ENCODE measurements at regions of chr1 and their contacts with region 1.

Region 1: DNA sequence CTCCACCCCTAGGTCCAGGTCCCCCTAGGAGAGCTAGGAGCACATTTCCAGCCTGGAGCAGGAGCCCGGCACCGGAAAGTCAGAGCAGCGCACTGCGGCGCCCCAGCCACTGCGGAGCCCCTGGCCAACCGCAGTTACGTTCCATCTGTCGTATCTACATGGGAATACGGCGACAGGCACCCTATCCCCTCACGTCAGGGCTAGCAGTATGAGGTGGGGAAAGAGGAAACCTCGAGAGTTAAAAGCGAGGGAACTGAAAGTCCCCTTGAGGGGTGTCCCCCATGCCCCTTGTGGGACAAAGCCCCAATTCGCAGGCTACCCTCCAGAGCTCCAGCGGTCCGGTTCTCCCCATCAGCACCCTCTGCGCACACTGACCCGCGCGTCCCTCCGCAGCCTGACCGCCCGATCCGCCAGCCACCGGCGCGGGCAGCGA is 995 bp downstream of the COLGALT2 start:
- DNase-seq: peak; percentile 67
- ATAC-seq: no peak

Region 2: DNA sequence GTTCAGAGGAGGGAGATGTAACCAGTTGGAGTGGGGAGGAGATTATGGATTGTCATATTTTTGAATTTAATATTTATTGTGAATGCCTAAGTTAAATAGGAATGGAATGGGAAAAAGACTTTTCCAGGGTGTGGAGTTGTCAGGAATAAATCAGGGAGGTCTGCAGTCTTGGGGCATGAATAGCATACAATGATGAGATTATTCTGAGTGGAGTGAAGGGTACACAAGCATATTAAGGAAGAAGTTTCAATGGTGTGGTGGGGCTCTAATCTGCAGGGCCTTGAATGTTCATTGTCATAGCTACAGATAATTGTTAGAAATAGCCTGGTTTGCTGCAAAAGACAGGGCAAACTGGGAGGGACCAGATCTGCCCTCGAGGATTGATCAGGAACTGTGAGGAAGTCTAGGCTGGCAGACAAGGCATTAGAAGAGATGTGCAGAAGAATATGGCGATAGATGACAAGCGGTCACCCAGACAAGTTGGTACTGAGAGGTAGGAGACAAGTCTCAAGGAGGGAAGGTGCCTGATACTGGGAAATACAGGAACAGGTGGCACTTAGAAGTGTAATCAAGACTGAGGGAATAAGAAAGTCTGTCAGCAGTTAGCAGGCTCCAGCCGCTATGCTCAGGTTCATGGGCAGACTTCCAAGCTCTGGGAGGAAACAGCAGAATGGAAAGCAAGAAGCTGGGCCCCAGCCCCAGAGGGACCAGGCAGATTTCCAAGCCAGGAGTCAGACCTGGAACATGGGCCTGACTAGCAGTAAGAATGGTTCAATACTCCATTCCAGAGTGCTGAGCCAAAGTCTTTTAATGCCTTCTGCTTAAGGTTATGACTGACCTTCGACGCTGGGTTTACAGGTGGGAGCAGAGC is 252.5 kb before region 1 on chr1:
- intact Hi-C with region 1: no loop called
- DNase-seq: no peak
- ATAC-seq: peak; percentile 76

Region 3: GRCh38 chr1:183932412-183932811 is 104.1 kb before region 1 on chr1:
- intact Hi-C with region 1: loop called (anchors 5 kb)
- DNase-seq: peak; percentile 93
- ATAC-seq: peak; percentile 91

Region 4: GRCh38 chr1:183942933-183943693 is 93.4 kb before region 1 on chr1:
- intact Hi-C with region 1: no loop called
- DNase-seq: no peak
- ATAC-seq: no peak

Region 5: GRCh38 chr1:183956559-183957188 is 79.9 kb before region 1 on chr1:
- intact Hi-C with region 1: loop called (anchors 5 kb)
- DNase-seq: no peak
- ATAC-seq: peak; percentile 51

Measured in Right ventricle myocardium inferior (tissue), 1 donor.